ENCODE measurements at regions of chr2 and their contacts with region 1.

Region 1: DNA sequence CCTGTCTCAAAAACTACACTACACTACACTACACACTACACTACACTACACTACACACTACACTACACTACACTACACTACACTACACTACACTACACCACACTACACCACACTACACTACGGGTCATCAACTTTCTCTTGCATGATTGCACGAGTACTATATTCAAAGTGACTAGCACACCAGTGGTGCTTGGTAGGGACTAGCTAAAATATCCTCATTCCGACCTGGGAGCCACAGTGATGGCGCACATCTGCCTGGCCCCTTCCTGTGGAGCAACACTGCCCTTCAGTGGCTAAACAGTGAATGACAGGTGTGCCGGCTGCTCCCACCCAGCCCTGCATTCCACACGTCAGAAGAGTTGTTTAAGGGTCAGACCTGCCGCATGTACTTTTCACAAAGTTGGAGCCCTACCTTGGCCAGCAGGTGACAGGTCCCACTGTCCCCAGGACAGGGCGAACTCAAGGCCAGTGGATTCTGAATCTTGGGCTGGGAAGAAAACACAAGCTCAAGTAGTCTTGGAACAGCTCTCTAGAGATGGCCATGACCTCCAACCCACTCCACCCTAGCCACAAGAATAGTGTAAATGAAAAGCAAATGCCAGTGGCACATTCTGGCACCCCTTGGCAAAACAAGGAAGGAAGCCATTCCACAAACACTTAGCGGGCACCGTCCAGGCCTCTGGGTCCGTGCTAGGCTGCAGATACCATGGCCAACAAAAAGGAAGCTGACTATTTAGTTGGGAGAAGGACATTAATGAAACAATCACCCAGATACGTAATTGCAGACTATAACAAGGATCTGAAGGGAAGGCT is 79.7 kb upstream of the MSH2 start:
- DNase-seq: peak; percentile 81
- CTCF ChIP-seq: peak; percentile 94

Region 2: DNA sequence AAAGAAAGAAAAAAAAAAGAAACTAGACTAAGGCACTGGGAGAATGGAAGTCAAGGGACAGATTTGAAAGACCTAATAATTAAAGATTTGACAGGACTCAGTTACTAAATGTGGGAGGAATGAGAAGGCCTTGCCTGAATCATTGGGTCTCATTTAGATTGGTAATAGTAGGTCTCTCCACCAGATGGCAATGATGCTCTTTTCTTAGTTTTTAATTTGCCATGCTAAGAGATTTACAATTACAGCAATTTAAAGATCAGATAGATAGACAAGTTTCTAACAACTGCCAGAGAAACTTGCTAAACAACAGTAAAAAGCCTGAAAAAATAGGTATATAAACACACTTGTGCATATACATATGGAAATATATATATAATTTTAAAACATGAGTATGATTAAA is 690.9 kb before region 1 on chr2:
- in situ Hi-C with region 1: loop called (anchors 25 kb)
- DNase-seq: no peak
- CTCF ChIP-seq: peak; percentile 9

Region 3: DNA sequence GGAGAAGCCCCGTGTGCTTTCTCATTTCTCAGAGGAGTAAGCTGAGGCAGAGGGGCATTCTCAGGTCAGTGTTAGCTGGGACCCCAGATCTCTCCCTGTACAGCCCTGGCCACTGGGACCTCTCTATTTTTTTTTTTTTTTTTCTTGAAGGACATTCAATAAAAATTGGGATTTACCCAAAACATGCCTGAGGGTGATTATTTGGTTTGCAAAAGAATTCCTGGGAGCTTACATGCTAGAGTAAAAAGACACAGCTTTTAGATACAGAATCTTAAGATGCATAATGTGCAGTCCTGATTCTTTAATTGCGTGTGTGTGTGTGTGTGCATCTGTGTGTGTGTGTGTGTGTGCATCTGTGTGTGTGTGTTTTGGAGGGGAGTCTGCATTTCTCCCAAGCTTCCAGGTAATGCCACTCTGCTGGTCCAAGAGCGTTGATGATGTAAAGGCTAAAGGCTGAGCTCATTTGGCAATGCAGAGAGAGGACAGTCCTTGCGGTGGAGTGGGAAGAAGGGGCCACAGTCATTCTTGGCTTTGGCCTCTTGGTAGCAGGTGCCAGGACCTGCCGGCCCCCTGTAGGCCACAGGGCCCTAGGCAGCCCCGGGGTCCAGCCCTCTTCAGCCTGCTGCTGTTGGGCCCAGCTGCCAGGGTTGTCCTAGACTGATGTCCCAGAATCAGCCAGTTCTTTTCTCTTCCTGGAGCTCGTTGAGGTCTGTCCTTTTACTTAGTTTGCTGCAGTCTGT is 333.6 kb before region 1 on chr2:
- in situ Hi-C with region 1: loop called (anchors 10 kb)
- DNase-seq: no peak
- CTCF ChIP-seq: no peak

Region 4: DNA sequence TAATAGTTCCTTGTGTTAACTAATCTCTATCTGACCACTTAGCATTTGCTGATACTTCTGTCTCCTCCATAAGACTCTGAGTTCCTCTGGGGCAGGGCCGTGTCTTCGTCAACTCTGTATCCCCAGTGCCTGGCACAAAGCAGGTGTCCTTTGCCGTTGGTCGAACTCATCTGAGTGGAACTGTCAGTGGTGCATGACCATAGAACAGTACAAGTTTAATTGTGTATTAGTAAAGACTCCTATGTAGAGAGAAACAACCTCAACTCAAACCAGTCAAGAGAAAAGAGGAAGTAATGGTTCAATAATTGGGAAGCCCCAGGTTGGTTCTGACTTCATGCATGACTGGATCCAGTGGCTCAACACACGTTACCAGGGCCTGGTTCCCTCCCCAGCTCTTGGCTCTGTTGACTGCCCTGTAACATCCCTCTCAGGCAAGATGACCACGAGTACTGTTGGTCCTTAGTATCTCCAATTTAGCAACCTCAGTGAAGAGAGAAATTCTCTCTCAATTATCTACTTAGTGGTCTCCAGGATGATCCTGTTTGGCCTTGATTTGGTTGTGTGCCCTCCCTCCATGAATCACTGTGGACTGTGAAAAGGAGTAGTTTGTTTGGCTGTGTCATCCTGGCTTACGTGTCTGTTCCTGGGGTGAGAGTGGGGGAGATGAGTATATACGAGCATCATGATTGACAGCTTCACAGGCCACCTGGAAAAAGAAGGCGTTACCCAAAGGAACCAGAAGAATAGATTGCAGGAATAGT is 401.2 kb after region 1 on chr2:
- in situ Hi-C with region 1: no loop called
- DNase-seq: peak; percentile 72
- CTCF ChIP-seq: no peak

Measured in GM13976 (cell line).